ENCODE measurements at regions of chr11 and their contacts with region 1.

Region 1: GRCh38 chr11:61947486-61948210 is 2.5 kb upstream of the BEST1 start:
- DNase-seq: peak; percentile 96
- H3K4me3 ChIP-seq: no peak overlapping the region
- H3K27ac ChIP-seq: peak overlapping the region; percentile 44
- H3K4me1 ChIP-seq: peaks cover 51% of the 10 kb centered on the region
- H3K27me3 ChIP-seq: no peaks in the 10 kb centered on the region
- CTCF ChIP-seq: peak; percentile 99

Region 2: DNA sequence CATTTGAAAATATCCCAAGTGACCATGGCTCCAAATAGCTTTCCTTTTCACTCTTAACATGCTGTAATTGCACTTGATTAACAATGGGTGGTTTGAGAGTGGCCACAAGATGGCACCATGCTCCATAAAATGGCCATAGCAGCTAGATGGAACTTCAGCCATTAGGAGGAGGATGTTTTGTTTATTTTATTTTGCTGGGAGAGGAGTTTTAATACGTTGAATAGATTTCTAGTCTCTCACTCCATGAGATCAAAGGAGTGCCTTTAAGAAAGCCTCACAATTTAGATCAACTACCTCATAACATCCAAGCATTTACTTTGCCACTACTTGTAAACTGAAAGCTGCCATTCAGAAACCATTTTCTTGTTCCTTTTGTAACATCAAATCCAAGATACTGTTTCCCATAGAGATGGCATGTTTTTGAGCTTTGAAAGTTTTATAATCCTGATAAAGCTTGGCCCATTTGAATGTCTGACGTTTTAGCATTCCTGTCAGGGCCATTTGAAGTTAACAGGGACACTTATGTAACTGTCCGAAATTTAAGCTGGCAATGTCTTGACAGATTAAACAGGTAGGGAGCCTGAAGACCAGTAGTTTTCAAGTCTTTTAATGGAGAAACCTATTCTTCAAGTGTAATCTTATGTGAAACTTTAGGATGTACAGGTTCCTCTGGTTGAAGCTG is 150.2 kb before region 1 on chr11:
- CTCF ChIA-PET with region 1: interaction called, 7 read pairs
- POLR2A ChIA-PET with region 1: interaction called, 3 read pairs
- intact Hi-C with region 1: loop called (anchors 1 kb)
- DNase-seq: peak; percentile 88
- H3K4me3 ChIP-seq: no peak overlapping the region
- H3K27ac ChIP-seq: peak overlapping the region; percentile 62
- H3K4me1 ChIP-seq: peaks cover 14% of the 10 kb centered on the region
- H3K27me3 ChIP-seq: no peaks in the 10 kb centered on the region
- CTCF ChIP-seq: peak; percentile 96

Region 3: DNA sequence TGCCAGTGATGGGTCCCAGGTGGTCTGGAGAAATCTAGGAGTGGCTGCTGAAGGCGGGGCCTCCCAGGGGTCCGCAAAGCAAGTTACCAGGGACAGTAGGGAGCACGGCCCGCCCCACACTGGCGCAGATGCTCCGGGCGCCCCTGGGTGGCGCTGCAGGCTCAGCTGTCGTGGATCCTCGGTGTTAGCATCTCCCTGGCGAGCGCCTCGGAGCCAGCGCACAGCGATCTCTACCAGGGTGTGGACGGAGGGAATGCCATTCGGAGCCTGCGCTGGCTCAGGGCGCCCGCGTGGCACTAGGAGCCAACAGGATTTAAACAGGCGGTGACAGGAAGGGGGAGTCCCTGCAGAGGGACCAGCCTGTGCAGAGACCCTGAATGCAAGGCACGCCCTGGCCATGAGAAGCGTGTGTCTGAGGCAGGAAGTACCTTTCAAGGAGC is 76.5 kb before region 1 on chr11:
- CTCF ChIA-PET with region 1: interaction called, 8 read pairs
- POLR2A ChIA-PET with region 1: no interaction called
- intact Hi-C with region 1: loop called (anchors 1 kb)
- DNase-seq: peak; percentile 93
- H3K4me3 ChIP-seq: peak overlapping the region; percentile 10
- H3K27ac ChIP-seq: peak overlapping the region; percentile 70
- H3K4me1 ChIP-seq: peaks cover 20% of the 10 kb centered on the region
- H3K27me3 ChIP-seq: no peaks in the 10 kb centered on the region
- CTCF ChIP-seq: peak; percentile 100

Region 4: DNA sequence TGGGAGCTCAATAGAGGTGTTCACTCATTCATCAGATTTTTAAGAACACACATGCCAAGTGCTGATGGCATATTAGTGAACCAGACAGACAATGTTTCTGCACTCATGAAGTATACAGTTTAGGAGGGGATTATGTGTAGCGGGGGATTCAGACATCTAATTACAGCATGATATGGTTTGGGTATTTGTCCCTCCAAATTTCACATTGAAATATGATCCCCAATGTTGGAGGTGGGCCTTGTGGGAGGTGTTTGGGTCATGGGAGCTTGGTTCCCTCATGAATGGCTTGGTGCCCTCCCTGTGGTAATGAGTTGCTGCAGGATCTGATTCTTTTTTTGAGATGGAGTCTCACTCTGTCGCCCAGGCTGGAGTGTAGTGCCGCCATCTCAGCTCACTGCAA is 21.4 kb before region 1 on chr11:
- CTCF ChIA-PET with region 1: interaction called, 10 read pairs
- POLR2A ChIA-PET with region 1: interaction called, 5 read pairs
- intact Hi-C with region 1: no loop called
- DNase-seq: no peak
- H3K4me3 ChIP-seq: no peak overlapping the region
- H3K27ac ChIP-seq: no peak overlapping the region
- H3K4me1 ChIP-seq: peaks cover 36% of the 10 kb centered on the region
- H3K27me3 ChIP-seq: no peaks in the 10 kb centered on the region
- CTCF ChIP-seq: no peak

Region 5: GRCh38 chr11:61967116-61967923 is 19.7 kb after region 1 on chr11 and contains the start of gene FTH1:
- CTCF ChIA-PET with region 1: no interaction called
- POLR2A ChIA-PET with region 1: interaction called, 28 read pairs
- intact Hi-C with region 1: no loop called
- DNase-seq: peak; percentile 96
- H3K4me3 ChIP-seq: peak within 1 kb of the TSS; percentile 90
- H3K27ac ChIP-seq: peak within 1 kb of the TSS; percentile 98
- H3K4me1 ChIP-seq: peaks cover 52% of the 10 kb centered on the region
- H3K27me3 ChIP-seq: no peaks in the 10 kb centered on the region
- CTCF ChIP-seq: no peak
- total RNA-seq, gene FTH1: 2,291 and 2,484 TPM in 2 replicates

Region 6: DNA sequence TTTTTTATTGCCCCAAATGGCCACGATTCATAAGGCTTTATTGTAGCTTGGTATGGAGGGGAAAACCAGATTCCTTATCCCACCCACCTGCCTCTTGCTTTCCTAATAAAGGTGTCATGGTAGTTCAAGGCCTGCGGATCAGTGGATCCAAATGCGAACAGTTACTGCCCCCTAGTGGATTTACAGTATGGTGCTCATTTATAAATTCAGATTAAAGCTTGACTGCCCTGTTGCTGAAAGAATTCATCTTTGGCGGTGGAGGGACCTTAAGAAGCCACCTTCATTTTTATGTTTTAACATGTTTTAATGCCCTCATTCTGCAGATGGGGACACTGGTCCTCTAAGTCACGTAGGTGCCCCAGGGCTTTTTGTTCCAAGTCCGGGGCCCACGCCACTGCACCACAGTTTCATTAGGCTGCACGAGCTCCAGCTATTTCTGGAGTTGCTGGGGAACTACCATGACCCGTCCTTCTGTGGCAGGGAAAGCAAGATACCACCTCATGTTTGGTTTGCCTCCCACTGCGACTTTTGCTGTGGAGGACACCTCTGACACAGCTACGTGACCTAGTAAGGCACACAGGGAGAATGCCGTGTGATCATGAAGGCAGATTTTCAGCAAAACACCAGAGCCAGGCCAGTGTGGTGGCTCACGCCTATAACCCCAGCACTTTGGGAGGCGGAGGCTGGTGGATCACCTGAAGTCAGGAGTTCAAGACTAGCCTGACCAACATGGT is 160.5 kb after region 1 on chr11:
- CTCF ChIA-PET with region 1: interaction called, 13 read pairs
- POLR2A ChIA-PET with region 1: interaction called, 3 read pairs
- intact Hi-C with region 1: no loop called
- DNase-seq: peak; percentile 84
- H3K4me3 ChIP-seq: no peak overlapping the region
- H3K27ac ChIP-seq: no peak overlapping the region
- H3K4me1 ChIP-seq: peaks cover 3% of the 10 kb centered on the region
- H3K27me3 ChIP-seq: no peaks in the 10 kb centered on the region
- CTCF ChIP-seq: peak; percentile 91

Region 7: DNA sequence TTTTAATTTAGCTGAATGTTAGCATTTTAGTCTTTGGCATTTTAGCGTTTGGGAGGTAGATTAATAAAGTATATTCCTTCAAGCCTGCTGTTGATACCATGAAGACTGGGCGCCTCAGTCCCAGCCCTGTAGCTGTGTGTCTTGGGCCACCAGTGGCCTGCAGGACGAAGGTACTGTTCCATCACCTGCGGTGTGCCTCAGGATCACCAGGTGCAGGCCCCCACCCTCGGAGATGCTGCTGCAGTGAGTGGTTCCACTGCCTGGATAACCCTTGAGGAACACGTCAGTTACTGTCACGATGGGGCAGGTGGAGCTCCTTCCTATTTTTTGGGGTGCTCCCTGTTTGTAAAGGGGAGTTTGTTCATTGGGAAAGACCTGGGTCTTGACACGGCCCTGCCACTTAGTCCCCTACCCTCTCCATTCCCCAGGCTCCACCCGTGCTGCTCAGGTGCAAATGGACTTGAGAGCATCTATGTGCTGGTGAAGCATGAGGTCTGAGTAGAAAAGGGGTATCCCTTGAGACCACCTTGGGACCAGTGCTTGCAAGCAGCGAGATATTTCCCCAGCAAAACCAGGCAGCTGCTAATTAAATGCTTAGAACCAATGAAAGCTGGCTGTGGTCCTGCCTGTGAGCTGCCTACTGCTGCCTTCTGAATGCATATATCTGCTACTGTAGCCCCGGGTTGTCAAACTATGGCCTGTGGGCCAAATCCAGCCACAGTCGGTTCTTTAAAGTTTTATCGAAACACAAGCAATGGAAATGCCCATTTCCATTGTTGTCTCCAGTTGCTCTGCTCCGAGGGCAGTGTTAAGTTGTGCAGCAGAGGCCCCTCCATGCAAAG is 204.8 kb after region 1 on chr11:
- CTCF ChIA-PET with region 1: no interaction called
- POLR2A ChIA-PET with region 1: no interaction called
- intact Hi-C with region 1: no loop called
- DNase-seq: no peak
- H3K4me3 ChIP-seq: no peak overlapping the region
- H3K27ac ChIP-seq: no peak overlapping the region
- H3K4me1 ChIP-seq: no peaks in the 10 kb centered on the region
- H3K27me3 ChIP-seq: no peaks in the 10 kb centered on the region
- CTCF ChIP-seq: no peak

Region 8: GRCh38 chr11:62217191-62217748 is 269.6 kb after region 1 on chr11:
- CTCF ChIA-PET with region 1: no interaction called
- POLR2A ChIA-PET with region 1: no interaction called
- intact Hi-C with region 1: no loop called
- DNase-seq: peak; percentile 39
- H3K4me3 ChIP-seq: no peak overlapping the region
- H3K27ac ChIP-seq: no peak overlapping the region
- H3K4me1 ChIP-seq: no peaks in the 10 kb centered on the region
- H3K27me3 ChIP-seq: no peaks in the 10 kb centered on the region
- CTCF ChIP-seq: peak; percentile 66